ENCODE measurements at regions of chr13 and their contacts with region 1.

Region 1: DNA sequence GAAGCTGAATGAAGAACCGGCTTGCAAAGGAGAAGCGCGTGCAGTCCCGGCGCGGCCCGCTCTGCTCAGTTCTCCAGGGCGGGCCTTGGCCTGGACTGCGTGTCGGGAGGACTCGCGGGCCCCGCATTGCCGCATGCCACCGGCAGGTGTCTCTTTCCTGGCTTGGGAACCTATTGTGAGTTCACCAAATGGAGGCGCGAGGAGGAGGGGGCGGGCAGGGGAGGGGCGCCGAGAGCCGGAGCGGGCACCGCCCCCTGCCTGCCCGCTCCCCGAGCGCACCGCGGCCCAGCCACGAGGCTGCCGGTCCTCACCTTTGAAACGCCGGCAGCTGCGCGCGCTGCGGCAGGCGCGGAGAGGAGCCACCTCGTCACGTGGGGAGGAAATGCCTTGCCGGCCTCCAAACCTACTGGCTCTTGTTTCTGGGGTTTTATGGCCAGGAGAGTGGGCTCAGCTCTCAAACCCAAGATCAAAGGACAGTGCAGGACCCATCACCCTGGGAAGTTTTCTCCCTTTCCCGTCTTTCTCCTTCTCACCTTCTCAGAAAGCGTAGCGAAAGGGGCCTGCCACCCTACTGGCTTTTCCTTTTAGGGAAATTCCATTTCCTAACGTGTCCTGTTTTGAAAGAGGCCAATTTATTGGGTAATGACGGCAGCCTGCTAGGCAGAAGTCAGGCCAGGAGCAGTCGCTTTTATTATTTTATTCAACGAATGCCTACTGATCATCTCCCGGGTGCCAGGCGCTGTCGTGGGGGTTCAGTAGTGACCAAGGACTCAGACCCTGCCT is 13.8 kb upstream of the UBE2L5 start:
- DNase-seq: peak; percentile 96
- H3K4me3 Mint-ChIP-seq: peak overlapping the region; percentile 49
- H3K27ac Mint-ChIP-seq: no peak overlapping the region
- H3K4me1 Mint-ChIP-seq: peaks cover 10% of the 10 kb centered on the region
- H3K27me3 Mint-ChIP-seq: no peaks in the 10 kb centered on the region

Region 2: DNA sequence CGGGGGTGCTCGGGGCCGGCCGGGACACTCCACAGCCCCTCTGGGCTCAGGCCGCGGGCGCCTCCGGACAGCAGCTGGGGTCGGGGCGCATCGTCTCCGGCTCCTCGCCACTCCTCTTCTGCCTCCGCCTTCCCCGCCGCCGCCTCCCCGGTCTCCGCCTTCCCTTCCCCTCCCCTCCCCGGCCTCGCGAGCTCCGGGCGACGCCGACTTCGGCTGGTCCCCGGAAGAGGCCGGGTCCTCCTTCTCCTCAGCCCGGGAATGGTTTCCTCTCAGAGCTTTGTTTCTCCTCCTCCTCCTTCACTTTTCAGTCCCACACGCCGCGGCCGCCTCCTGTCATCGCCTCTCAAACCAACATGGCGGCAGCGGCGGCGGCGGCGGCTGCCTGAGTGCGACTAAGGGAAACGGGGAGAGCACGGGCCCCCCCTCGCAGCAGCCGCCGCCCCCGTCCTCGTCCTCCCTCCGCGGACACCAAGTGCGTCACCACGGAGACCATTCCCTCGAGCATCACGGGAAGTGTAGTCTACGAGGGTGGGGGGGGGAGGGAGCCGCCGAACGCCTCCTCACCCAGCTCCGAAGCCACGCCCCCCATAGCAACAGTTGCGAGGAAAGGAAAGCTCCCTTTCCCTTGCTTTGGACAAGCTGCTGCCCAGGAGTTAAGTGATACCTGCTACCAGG is 558.1 kb before region 1 on chr13 and contains the start of gene UBL3:
- CTCF ChIA-PET with region 1: no interaction called
- intact Hi-C with region 1: no loop called
- DNase-seq: peak; percentile 96
- H3K4me3 Mint-ChIP-seq: peak within 1 kb of the TSS; percentile 83
- H3K27ac Mint-ChIP-seq: peak within 1 kb of the TSS; percentile 97
- H3K4me1 Mint-ChIP-seq: peaks cover 28% of the 10 kb centered on the region
- H3K27me3 Mint-ChIP-seq: no peaks in the 10 kb centered on the region
- total RNA-seq, gene UBL3: 8.3 to 8.5 TPM

Region 3: GRCh38 chr13:30371649-30372265 is 36.8 kb before region 1 on chr13:
- CTCF ChIA-PET with region 1: interaction called, 4 read pairs
- intact Hi-C with region 1: loop called (anchors 1 kb)
- DNase-seq: peak; percentile 87
- H3K4me3 Mint-ChIP-seq: peak overlapping the region; percentile 58
- H3K27ac Mint-ChIP-seq: peak overlapping the region; percentile 87
- H3K4me1 Mint-ChIP-seq: peaks cover 75% of the 10 kb centered on the region
- H3K27me3 Mint-ChIP-seq: no peaks in the 10 kb centered on the region

Region 4: DNA sequence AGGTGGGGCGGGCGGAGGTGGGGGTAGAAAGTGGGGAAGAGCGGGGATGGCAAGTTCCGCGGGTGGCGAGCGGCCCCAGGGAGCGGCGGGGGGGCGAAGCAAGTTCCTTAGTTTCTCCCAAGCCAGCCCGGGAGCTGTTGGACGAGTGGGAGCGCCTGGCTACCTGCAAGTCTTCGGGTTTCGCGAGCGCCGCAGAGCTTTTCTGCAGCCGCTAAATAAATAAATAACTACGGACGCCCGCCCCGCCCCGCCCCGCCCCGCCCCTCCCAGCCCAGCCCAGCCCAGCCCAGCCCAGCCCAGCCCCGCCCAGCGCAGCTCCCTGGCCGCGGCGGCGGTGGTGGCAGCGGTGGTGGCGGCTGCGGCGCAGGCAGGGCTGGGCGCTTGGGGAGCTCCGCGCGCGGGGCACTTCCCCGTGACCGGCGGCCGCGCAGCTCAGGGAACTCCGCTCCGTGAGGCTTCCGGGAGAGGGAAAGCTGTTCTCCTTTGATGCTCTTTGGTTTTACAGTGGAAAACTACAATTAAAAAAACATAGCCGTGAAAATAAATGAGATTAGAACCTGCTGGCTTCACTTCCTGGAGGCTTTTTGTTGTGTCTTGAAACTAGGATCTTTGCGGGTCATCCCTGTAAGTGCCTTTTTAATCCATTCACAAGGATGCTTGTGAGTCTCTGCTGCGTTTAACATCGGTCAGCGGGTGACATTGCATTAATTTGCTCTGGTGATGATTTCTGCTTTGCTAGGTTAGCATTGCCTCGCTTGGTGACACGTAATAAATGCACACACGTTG is 13.7 kb after region 1 on chr13 and contains the start of gene UBE2L5:
- CTCF ChIA-PET with region 1: interaction called, 7 read pairs
- intact Hi-C with region 1: loop called (anchors 1 kb)
- DNase-seq: peak; percentile 72
- H3K4me3 Mint-ChIP-seq: peak within 1 kb of the TSS; percentile 80
- H3K27ac Mint-ChIP-seq: peak within 1 kb of the TSS; percentile 57
- H3K4me1 Mint-ChIP-seq: peaks cover 10% of the 10 kb centered on the region
- H3K27me3 Mint-ChIP-seq: no peaks in the 10 kb centered on the region
- total RNA-seq, gene UBE2L5: not detected

Region 5: GRCh38 chr13:30572859-30573275 is 164.4 kb after region 1 on chr13:
- CTCF ChIA-PET with region 1: no interaction called
- intact Hi-C with region 1: loop called (anchors 2 kb)
- DNase-seq: peak; percentile 29
- H3K4me3 Mint-ChIP-seq: peak overlapping the region; percentile 41
- H3K27ac Mint-ChIP-seq: peak overlapping the region; percentile 12
- H3K4me1 Mint-ChIP-seq: peaks cover 33% of the 10 kb centered on the region
- H3K27me3 Mint-ChIP-seq: no peaks in the 10 kb centered on the region

Region 6: GRCh38 chr13:30865123-30866049 is 456.9 kb after region 1 on chr13:
- CTCF ChIA-PET with region 1: no interaction called
- intact Hi-C with region 1: loop called (anchors 2 kb)
- DNase-seq: peak; percentile 64
- H3K4me3 Mint-ChIP-seq: no peak overlapping the region
- H3K27ac Mint-ChIP-seq: no peak overlapping the region
- H3K4me1 Mint-ChIP-seq: peaks cover 3% of the 10 kb centered on the region
- H3K27me3 Mint-ChIP-seq: peaks cover 8% of the 10 kb centered on the region